Heart right ventricle (tissue), 16 donors: ENCODE measurements at regions of chr1 and their contacts with region 1.

Region 1: GRCh38 chr1:28983509-28984310 is 69.3 kb downstream of the EPB41 start:
- DNase-seq: peak; percentile 21 to 46
- ATAC-seq: peak; percentile 74 to 94 (median 83)
- H3K4me3 ChIP-seq: no peak overlapping the region
- H3K27ac ChIP-seq: peak overlapping the region in 8 of 10 donors; percentile 13 to 73 (median 61)
- H3K4me1 ChIP-seq: peaks cover 0 to 44% (median 10%) of the 10 kb centered on the region in 9 donors
- H3K27me3 ChIP-seq: no peaks in the 10 kb centered on the region
- CTCF ChIP-seq: peak in 5 of 9 donors; percentile 21 to 45 (median 37)

Region 2: GRCh38 chr1:28886731-28887418 is 96.8 kb before region 1 on chr1:
- intact Hi-C with region 1: loop called in 5 of 10 experiments (anchors 2 to 10 kb)
- DNase-seq: peak; percentile 80 to 86
- ATAC-seq: peak; percentile 79 to 89 (median 84)
- H3K4me3 ChIP-seq: peak overlapping the region; percentile 53 to 99 (median 88)
- H3K27ac ChIP-seq: peak overlapping the region; percentile 34 to 93 (median 86)
- H3K4me1 ChIP-seq: peaks cover 0 to 45% (median 16%) of the 10 kb centered on the region in 9 donors
- H3K27me3 ChIP-seq: peaks cover 0 to 6% (median 0%) of the 10 kb centered on the region in 7 donors
- CTCF ChIP-seq: no peak